Gastrocnemius medialis (tissue), 4 donors: ENCODE measurements at regions of chr16 and their contacts with region 1.

Region 1: GRCh38 chr16:3282730-3283524 is at the start of gene ZNF263:
- DNase-seq: peak; percentile 95 to 97
- ATAC-seq: peak; percentile 99
- H3K4me3 ChIP-seq: peak within 1 kb of the TSS; percentile 72 to 86 (median 80)
- H3K27ac ChIP-seq: peak within 1 kb of the TSS; percentile 98 to 100 (median 99)
- H3K4me1 ChIP-seq: peaks cover 22% of the 10 kb centered on the region in 2 donors
- H3K27me3 ChIP-seq: no peaks in the 10 kb centered on the region
- CTCF ChIP-seq: no peak
- POLR2A ChIP-seq: peak; percentile 66 to 81
- total RNA-seq, gene ZNF263: 13.5 to 18.5 (median 15.5) TPM

Region 2: DNA sequence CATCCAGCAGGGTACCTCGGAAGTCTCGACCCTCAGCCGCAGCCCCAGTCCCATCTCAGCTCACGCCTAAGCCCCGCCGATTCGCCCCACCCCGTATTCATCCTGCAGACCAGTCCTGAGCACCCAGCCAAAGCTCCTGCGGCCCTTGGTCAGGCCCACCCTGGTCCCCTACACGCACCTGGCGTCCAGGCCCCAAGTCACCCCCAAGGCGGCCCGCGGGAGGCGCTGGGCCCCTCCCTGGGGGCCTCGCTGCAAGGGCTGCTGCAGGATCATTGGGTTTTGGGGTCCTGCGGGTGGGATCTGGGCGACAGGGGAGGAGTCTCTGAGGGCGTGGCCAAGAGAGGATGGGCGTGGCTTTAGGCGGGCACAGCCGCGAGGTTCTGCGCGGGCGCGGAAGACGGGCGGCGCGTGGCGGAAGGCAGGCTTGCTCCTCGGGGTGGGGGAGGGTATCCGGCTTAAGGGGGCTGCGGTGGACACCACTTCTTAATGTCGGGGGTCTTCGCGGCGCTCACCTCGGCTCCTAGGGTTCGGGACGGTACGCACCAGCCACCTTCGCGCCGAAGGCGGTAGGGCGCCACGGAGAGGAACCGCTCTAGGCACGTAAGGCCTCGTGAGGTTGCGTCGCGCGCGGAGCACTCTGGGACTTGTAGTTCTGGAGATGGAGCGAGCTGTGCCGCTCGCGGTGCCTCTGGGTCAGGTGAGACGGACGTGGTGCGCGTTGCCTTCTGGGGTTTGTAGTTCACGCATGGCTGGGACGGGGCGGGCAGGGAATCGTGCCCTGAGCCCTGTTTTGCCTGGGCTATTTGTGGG is 259.1 kb before region 1 on chr16 and contains the starts of genes HCFC1R1 and THOC6:
- in situ Hi-C with region 1: no loop called
- intact Hi-C with region 1: loop called (anchors 5 kb)
- DNase-seq: peak; percentile 96 to 97
- ATAC-seq: peak; percentile 46 to 60
- H3K4me3 ChIP-seq: peak within 1 kb of the TSS; percentile 71 to 99 (median 82)
- H3K27ac ChIP-seq: peak within 1 kb of the TSS; percentile 96 to 100 (median 98)
- H3K4me1 ChIP-seq: peaks cover 32 to 62% of the 10 kb centered on the region in 2 donors
- H3K27me3 ChIP-seq: peaks cover 1 to 8% (median 2%) of the 10 kb centered on the region in 3 donors
- CTCF ChIP-seq: no peak
- POLR2A ChIP-seq: peak; percentile 81 to 83
- total RNA-seq, gene HCFC1R1: 41.8 to 124 (median 66.9) TPM
- total RNA-seq, gene THOC6: 15.0 to 31.1 (median 21.5) TPM

Region 3: DNA sequence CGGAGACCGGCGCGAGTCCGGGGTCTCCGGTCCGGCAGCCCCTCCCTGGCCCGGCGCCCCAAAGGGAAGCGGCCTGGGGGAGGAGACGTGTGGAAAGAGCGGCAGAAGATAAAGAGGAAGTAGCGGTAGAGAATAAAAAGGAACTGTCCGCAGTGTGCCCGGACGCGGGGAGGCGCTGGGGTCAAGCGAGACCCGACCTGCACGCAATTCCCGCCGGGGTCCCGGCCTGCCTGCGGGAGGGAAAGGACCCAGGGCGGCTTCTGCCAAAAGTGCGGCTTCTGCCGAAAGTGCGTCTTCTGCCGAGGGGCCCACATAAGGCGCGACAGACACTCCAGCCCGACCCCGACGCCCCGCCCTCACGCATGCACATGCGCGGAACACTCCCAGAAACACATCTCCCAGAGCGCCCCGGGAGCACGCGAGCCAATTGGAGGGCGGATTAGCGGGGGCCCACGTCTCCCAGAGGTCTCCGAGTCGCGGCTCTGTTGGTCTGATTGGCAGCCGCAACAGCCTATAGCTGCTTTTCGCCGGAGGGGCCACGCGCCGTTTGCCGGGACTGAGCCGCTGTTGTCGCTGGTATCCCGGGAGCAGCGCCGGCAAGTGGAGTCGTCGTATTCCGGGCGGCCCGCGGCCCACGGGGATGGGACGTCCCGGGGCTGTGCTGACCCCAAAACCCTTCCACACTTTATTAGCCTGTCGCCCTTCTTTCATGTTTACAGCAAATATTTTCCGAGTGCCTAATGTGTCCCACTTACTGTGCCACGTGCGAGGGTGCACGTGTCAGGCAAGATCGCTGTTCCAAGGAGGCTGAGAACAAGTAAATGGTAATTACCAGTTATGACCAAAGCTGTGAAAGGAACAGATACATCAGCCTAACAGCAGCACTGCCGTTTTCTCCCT is 18.5 kb before region 1 on chr16:
- in situ Hi-C with region 1: no loop called
- intact Hi-C with region 1: loop called (anchors 1 kb)
- DNase-seq: peak; percentile 93 to 95
- ATAC-seq: peak; percentile 91 to 93
- H3K4me3 ChIP-seq: peak overlapping the region; percentile 65 to 94 (median 78)
- H3K27ac ChIP-seq: peak overlapping the region; percentile 92 to 99 (median 94)
- H3K4me1 ChIP-seq: peaks cover 0 to 5% of the 10 kb centered on the region in 2 donors
- H3K27me3 ChIP-seq: no peaks in the 10 kb centered on the region
- CTCF ChIP-seq: peak in 4 of 5 experiments; percentile 23 to 42 (median 34)
- POLR2A ChIP-seq: peak; percentile 86 to 90

Region 4: DNA sequence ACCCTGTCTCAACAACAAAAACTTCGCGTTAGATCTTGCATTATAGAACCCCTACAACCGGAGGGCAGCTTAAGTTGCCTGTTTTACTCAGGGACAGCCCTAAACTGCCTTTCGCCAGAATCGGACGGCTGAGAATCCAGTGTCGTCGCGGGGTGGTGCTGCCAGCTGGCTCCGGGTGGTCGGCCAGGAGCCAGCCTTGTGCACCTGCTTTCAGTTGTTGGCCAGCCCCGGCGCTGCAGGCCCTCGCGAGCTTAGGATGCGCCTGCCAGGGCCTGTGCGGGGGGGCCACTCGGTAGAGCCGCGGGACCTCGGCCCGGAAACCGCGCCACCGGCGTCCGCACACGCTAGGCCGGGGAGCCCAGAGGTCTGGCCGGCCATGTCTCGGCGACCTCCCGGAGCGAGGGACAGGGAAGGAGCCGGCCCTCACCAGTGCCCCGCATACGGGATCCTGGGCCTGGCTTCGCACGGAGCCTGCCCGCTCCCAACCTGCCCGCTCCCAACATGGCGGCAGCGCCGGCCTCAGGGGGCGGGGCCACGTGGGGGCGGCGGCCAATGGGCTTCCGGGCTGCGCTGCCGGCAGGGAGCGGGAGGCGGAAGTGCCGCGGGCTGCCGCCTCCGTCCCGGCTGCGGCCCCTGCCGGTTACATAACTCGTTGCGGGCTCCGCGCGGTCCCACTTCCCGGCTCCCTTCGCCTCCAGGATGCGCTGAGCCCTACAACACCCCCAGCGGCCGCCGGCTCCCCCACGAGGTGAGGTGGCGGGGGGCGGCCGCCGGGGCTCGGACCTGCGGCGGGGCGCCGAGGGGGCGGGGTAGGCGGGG is 174.7 kb after region 1 on chr16:
- in situ Hi-C with region 1: no loop called
- intact Hi-C with region 1: loop called (anchors 1 kb)
- DNase-seq: peak; percentile 86 to 95
- ATAC-seq: peak; percentile 86 to 87
- H3K4me3 ChIP-seq: peak overlapping the region; percentile 73 to 93 (median 80)
- H3K27ac ChIP-seq: peak overlapping the region; percentile 94 to 99 (median 97)
- H3K4me1 ChIP-seq: peaks cover 60 to 67% of the 10 kb centered on the region in 2 donors
- H3K27me3 ChIP-seq: no peaks in the 10 kb centered on the region
- CTCF ChIP-seq: peak in 4 of 5 experiments; percentile 16 to 71 (median 50)
- POLR2A ChIP-seq: peak; percentile 48 to 66

Region 5: GRCh38 chr16:3611146-3611975 is 328.4 kb after region 1 on chr16 and contains the start of gene SLX4:
- in situ Hi-C with region 1: no loop called
- intact Hi-C with region 1: loop called (anchors 5 kb)
- DNase-seq: peak; percentile 72 to 86
- ATAC-seq: peak; percentile 91 to 96
- H3K4me3 ChIP-seq: peak within 1 kb of the TSS; percentile 86 to 100 (median 98)
- H3K27ac ChIP-seq: peak within 1 kb of the TSS; percentile 77 to 92 (median 88)
- H3K4me1 ChIP-seq: peaks cover 16 to 23% of the 10 kb centered on the region in 2 donors
- H3K27me3 ChIP-seq: no peaks in the 10 kb centered on the region
- CTCF ChIP-seq: no peak
- POLR2A ChIP-seq: peak; percentile 76 to 79
- total RNA-seq, gene SLX4: 1.8 to 3.6 (median 2.8) TPM

Region 6: GRCh38 chr16:3745751-3746355 is 462.9 kb after region 1 on chr16:
- in situ Hi-C with region 1: no loop called
- intact Hi-C with region 1: no loop called
- DNase-seq: peak; percentile 34 to 37
- ATAC-seq: peak; percentile 62 to 76
- H3K4me3 ChIP-seq: no peak overlapping the region
- H3K27ac ChIP-seq: peak overlapping the region; percentile 59 to 83 (median 74)
- H3K4me1 ChIP-seq: peaks cover 19 to 33% of the 10 kb centered on the region in 2 donors
- H3K27me3 ChIP-seq: no peaks in the 10 kb centered on the region
- CTCF ChIP-seq: no peak
- POLR2A ChIP-seq: no peak